Activated CD4-positive, alpha-beta T cell treated with anti-CD3 and anti-CD28 coated beads for 36 hours (primary cell): ENCODE measurements at regions of chr10 and their contacts with region 1.

Region 1: GRCh38 chr10:102641880-102642735 is 2.2 kb upstream of the TRIM8 start:
- DNase-seq: peak; percentile 99
- ATAC-seq: peak; percentile 72
- H3K4me3 Mint-ChIP-seq: peak overlapping the region; percentile 84
- H3K27ac Mint-ChIP-seq: peak overlapping the region; percentile 92
- H3K4me1 Mint-ChIP-seq: peaks cover 19% of the 10 kb centered on the region
- H3K27me3 Mint-ChIP-seq: no peaks in the 10 kb centered on the region

Region 2: GRCh38 chr10:101830322-101831168 is 811.6 kb before region 1 on chr10:
- CTCF ChIA-PET with region 1: interaction called, 4 read pairs
- POLR2A ChIA-PET with region 1: no interaction called
- intact Hi-C with region 1: loop called in 1 of 2 experiments (anchors 5 kb)
- DNase-seq: peak; percentile 96
- ATAC-seq: peak; percentile 77
- H3K4me3 Mint-ChIP-seq: peak overlapping the region; percentile 70
- H3K27ac Mint-ChIP-seq: peak overlapping the region; percentile 98
- H3K4me1 Mint-ChIP-seq: peaks cover 56% of the 10 kb centered on the region
- H3K27me3 Mint-ChIP-seq: no peaks in the 10 kb centered on the region

Region 3: GRCh38 chr10:101938316-101939281 is 703.5 kb before region 1 on chr10:
- CTCF ChIA-PET with region 1: no interaction called
- POLR2A ChIA-PET with region 1: no interaction called
- intact Hi-C with region 1: no loop called
- DNase-seq: no peak
- ATAC-seq: no peak
- H3K4me3 Mint-ChIP-seq: no peak overlapping the region
- H3K27ac Mint-ChIP-seq: peak overlapping the region; percentile 23
- H3K4me1 Mint-ChIP-seq: peaks cover 9% of the 10 kb centered on the region
- H3K27me3 Mint-ChIP-seq: no peaks in the 10 kb centered on the region

Region 4: DNA sequence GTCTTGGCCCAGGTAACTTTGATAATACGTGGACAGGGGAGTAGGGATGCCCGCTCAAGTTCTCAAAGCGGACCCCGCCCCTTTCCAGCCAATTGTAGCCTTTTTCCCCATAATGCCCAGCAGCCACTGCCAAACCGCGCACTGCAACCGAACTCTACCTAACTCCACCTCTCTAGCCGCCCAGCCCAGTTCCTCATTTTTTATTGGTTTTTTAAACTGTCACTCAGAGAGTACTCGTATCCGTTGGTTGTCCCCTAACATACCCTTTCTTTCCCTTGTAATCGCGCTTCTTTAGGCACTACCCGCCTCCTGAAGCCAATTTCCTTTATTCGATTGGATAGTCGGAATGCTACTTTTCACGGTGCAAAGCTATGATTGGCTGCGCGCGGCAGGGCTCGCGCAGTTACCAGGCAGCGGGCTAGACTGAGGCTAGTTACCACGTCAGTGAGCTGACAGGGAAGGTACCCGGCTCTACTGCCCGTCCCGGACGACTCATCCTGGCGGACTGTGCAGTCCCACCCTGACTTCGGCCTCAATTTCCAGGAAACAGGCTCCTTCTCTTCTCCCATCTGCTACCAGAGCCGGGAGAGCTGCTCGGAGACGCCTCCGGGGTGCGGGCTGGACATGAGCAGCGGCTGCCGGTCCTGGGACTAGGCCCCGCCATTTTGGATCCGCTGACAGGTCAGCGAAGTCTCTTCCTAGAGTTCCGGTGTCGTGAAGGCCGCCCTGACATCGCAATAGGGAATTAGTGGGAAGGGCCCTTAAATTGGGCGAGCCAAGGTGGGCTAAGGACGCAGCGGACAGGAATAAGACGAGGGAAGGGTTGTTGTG is 396.8 kb before region 1 on chr10 and contains the start of gene GBF1:
- CTCF ChIA-PET with region 1: no interaction called
- POLR2A ChIA-PET with region 1: no interaction called
- intact Hi-C with region 1: loop called in 1 of 2 experiments (anchors 1 kb)
- DNase-seq: peak; percentile 94
- ATAC-seq: peak; percentile 90
- H3K4me3 Mint-ChIP-seq: peak within 1 kb of the TSS; percentile 98
- H3K27ac Mint-ChIP-seq: peak within 1 kb of the TSS; percentile 81
- H3K4me1 Mint-ChIP-seq: peaks cover 44% of the 10 kb centered on the region
- H3K27me3 Mint-ChIP-seq: peaks cover 18% of the 10 kb centered on the region
- total RNA-seq, gene GBF1: 33.1 to 37.5 TPM

Region 5: GRCh38 chr10:102450194-102450938 is 191.7 kb before region 1 on chr10:
- CTCF ChIA-PET with region 1: no interaction called
- POLR2A ChIA-PET with region 1: no interaction called
- intact Hi-C with region 1: loop called in 1 of 2 experiments (anchors 1 kb)
- DNase-seq: peak; percentile 91
- ATAC-seq: peak; percentile 66
- H3K4me3 Mint-ChIP-seq: peak overlapping the region; percentile 95
- H3K27ac Mint-ChIP-seq: peak overlapping the region; percentile 93
- H3K4me1 Mint-ChIP-seq: peaks cover 25% of the 10 kb centered on the region
- H3K27me3 Mint-ChIP-seq: no peaks in the 10 kb centered on the region

Region 6: GRCh38 chr10:102743588-102744373 is 101.7 kb after region 1 on chr10 and contains the start of gene WBP1L:
- CTCF ChIA-PET with region 1: interaction called, 3 read pairs
- POLR2A ChIA-PET with region 1: interaction called, 3 read pairs
- intact Hi-C with region 1: loop called in 1 of 2 experiments (anchors 1 kb)
- DNase-seq: peak; percentile 96
- ATAC-seq: peak; percentile 98
- H3K4me3 Mint-ChIP-seq: peak within 1 kb of the TSS; percentile 92
- H3K27ac Mint-ChIP-seq: peak within 1 kb of the TSS; percentile 82
- H3K4me1 Mint-ChIP-seq: peaks cover 42% of the 10 kb centered on the region
- H3K27me3 Mint-ChIP-seq: no peaks in the 10 kb centered on the region
- total RNA-seq, gene WBP1L: 14.9 to 16.4 TPM

Region 7: DNA sequence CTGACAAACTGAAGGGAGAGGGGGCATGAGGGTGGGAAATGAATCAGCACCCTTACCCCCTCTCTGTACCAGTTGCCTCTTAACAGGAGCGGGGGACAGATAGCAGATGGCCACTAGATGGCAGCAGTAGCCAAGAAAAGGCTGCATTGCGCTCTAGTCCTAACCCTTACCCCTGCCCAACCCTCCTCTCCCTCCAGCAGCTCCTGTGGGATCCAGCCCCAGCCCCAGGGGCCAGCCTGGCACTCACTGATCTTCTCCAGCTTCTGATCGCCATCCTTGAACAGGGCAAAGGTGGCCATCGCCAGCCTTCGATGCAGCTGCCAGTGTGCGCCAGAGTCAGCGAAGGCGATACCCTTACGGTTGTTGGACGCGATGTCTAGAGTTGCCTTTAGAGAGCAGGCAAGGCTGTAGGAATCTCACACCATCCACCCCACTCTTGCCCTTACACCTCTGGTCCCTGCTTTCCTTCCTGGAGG is 192.9 kb after region 1 on chr10:
- CTCF ChIA-PET with region 1: no interaction called
- POLR2A ChIA-PET with region 1: no interaction called
- intact Hi-C with region 1: no loop called
- DNase-seq: peak; percentile 86
- ATAC-seq: peak; percentile 99
- H3K4me3 Mint-ChIP-seq: no peak overlapping the region
- H3K27ac Mint-ChIP-seq: no peak overlapping the region
- H3K4me1 Mint-ChIP-seq: no peaks in the 10 kb centered on the region
- H3K27me3 Mint-ChIP-seq: peaks cover 2% of the 10 kb centered on the region

Region 8: DNA sequence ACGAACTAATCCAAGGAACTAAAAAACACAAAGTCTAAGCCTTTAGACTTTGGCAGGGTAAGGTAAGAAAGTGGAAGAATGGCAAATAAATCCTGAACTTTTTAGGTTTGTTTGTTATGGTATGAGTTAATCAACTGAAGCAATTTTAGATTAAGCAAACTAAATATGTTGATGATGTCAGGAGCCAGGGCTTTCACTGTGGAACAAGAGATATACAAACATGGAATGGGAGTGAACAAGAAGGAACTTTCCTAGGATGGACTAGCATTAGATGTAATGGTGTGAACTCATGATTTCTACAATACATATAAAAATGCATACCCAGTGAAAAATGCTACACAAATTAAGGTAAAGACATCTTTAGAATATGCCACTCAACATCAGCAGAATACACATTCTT is 515.1 kb after region 1 on chr10:
- CTCF ChIA-PET with region 1: no interaction called
- POLR2A ChIA-PET with region 1: no interaction called
- intact Hi-C with region 1: no loop called
- DNase-seq: no peak
- ATAC-seq: no peak
- H3K4me3 Mint-ChIP-seq: no peak overlapping the region
- H3K27ac Mint-ChIP-seq: no peak overlapping the region
- H3K4me1 Mint-ChIP-seq: no peaks in the 10 kb centered on the region
- H3K27me3 Mint-ChIP-seq: no peaks in the 10 kb centered on the region

Region 9: DNA sequence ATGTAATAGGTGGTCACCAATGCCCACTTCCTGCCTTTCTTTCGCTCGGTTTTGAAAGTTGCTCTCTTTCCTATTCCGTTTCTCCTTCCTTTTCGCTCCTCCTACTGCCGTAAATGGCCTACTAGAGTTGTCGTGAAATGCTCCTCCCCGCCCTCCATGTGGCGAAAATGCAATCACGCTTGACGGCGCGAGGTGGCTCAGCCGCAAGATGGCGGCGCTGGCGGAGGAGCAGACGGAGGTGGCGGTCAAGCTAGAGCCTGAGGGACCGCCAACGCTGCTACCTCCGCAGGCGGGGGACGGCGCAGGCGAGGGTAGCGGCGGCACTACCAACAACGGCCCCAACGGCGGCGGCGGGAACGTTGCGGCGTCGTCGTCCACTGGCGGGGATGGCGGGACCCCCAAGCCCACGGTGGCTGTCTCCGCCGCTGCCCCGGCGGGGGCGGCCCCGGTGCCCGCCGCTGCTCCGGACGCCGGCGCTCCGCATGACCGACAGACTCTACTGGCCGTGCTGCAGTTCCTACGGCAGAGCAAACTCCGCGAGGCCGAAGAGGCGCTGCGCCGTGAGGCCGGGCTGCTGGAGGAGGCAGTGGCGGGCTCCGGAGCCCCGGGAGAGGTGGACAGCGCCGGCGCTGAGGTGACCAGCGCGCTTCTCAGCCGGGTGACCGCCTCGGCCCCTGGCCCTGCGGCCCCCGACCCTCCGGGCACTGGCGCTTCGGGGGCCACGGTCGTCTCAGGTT is 725.8 kb after region 1 on chr10 and contains the start of gene TAF5:
- CTCF ChIA-PET with region 1: no interaction called
- POLR2A ChIA-PET with region 1: no interaction called
- intact Hi-C with region 1: loop called in 1 of 2 experiments (anchors 1 kb)
- DNase-seq: peak; percentile 95
- ATAC-seq: peak; percentile 61
- H3K4me3 Mint-ChIP-seq: peak within 1 kb of the TSS; percentile 81
- H3K27ac Mint-ChIP-seq: peak within 1 kb of the TSS; percentile 85
- H3K4me1 Mint-ChIP-seq: peaks cover 16% of the 10 kb centered on the region
- H3K27me3 Mint-ChIP-seq: no peaks in the 10 kb centered on the region
- total RNA-seq, gene TAF5: 11.2 to 11.4 TPM